Right cardiac atrium (tissue), 5 donors: ENCODE measurements at regions of chr7 and their contacts with region 1.

Region 1: GRCh38 chr7:37495574-37496184 is 47.0 kb upstream of the ELMO1 start:
- DNase-seq: no peak
- ATAC-seq: peak in 1 of 2 donors; percentile 28
- H3K4me3 ChIP-seq: no peak overlapping the region
- H3K27ac ChIP-seq: no peak overlapping the region
- H3K4me1 ChIP-seq: no peaks in the 10 kb centered on the region
- H3K27me3 ChIP-seq: no peaks in the 10 kb centered on the region

Region 2: DNA sequence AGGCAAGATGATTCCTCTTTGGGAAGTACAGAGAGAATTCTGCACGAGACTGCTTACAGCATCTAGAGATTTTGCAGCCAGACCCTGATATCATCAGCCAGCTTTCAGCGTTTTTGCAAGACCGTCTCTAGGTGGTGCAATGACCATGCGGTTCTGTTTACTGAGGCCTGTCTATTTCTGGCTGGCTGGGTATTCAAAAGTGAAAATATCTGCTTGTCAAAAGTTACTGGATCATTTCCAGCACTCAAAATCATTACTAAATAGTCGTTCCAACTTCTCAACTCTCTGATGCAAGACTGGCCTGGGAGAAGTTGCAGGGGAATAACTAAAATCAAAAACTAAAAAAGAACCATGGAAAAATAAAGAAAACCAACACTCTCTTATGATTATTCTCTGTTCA is 287.2 kb before region 1 on chr7:
- intact Hi-C with region 1: loop called in 1 of 4 experiments (anchors 5 kb)
- DNase-seq: peak; percentile 65 to 83 (median 66)
- ATAC-seq: peak; percentile 89 to 95
- H3K4me3 ChIP-seq: no peak overlapping the region
- H3K27ac ChIP-seq: no peak overlapping the region
- H3K4me1 ChIP-seq: peaks cover 7% of the 10 kb centered on the region
- H3K27me3 ChIP-seq: no peaks in the 10 kb centered on the region